Right lobe of liver (tissue), 6 donors: ENCODE measurements at regions of chr22 and their contacts with region 1.

Region 1: GRCh38 chr22:17830043-17830961 is 56.0 kb upstream of the BID start:
- DNase-seq: peak; percentile 77 to 89 (median 85)
- ATAC-seq: peak; percentile 85 to 93 (median 90)
- H3K4me3 ChIP-seq: no peak overlapping the region
- H3K27ac ChIP-seq: peak overlapping the region in 2 of 3 donors; percentile 40 to 66
- H3K4me1 ChIP-seq: peaks cover 0 to 50% (median 19%) of the 10 kb centered on the region in 4 donors
- H3K27me3 ChIP-seq: no peaks in the 10 kb centered on the region
- CTCF ChIP-seq: peak; percentile 98 to 99 (median 99)
- POLR2A ChIP-seq: no peak

Region 2: GRCh38 chr22:17767233-17768065 is 62.9 kb before region 1 on chr22:
- intact Hi-C with region 1: no loop called
- DNase-seq: no peak
- ATAC-seq: peak in 2 of 4 donors; percentile 11 to 24
- H3K4me3 ChIP-seq: no peak overlapping the region
- H3K27ac ChIP-seq: peak overlapping the region; percentile 33 to 96 (median 36)
- H3K4me1 ChIP-seq: peaks cover 0 to 57% (median 20%) of the 10 kb centered on the region in 4 donors
- H3K27me3 ChIP-seq: no peaks in the 10 kb centered on the region
- CTCF ChIP-seq: no peak
- POLR2A ChIP-seq: no peak

Region 3: GRCh38 chr22:17891481-17892167 is 61.3 kb after region 1 on chr22:
- intact Hi-C with region 1: loop called in 1 of 2 experiments (anchors 5 kb)
- DNase-seq: peak; percentile 69 to 78 (median 78)
- ATAC-seq: peak; percentile 75 to 91 (median 87)
- H3K4me3 ChIP-seq: no peak overlapping the region
- H3K27ac ChIP-seq: peak overlapping the region; percentile 31 to 41 (median 36)
- H3K4me1 ChIP-seq: peaks cover 0 to 36% (median 13%) of the 10 kb centered on the region in 4 donors
- H3K27me3 ChIP-seq: no peaks in the 10 kb centered on the region
- CTCF ChIP-seq: peak; percentile 54 to 82 (median 70)
- POLR2A ChIP-seq: no peak